Activated CD4-positive, alpha-beta T cell treated with anti-CD3 and anti-CD28 coated beads for 36 hours (primary cell): ENCODE measurements at regions of chrX and their contacts with region 1.

Region 1: DNA sequence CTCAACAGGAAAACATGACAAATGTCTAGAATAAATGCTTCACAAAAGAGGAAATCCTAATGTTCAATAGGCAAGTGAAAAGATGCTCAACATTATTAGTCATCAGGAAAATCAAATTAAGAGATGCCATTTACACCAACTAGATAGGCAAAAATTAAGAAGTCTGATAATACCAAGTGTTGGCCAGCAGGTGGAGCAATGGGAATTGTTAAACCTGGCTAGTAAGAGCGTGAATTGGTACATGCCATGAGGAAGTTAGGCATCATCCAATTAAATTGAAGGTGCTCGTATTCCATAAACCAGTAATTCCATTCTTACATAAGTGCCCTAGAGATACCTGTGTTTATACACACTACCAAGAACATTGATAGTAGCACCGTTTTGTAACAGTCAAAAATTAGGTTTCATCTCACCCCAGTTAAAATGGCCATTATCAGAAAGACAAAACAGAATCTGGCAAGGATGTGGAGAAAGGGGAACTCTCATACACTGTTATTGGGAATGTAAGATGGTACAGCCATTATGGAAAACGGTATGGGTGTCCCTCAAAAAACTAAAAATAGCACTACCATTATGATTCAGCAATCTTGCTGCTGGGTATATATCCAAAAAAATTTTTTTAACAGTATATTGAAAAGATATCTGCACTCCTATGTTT is 14.0 kb upstream of the ZCCHC18 start:
- DNase-seq: peak; percentile 66
- ATAC-seq: no peak
- H3K4me3 Mint-ChIP-seq: no peak overlapping the region
- H3K27ac Mint-ChIP-seq: no peak overlapping the region
- H3K4me1 Mint-ChIP-seq: peaks cover 3% of the 10 kb centered on the region
- H3K27me3 Mint-ChIP-seq: peaks cover 7% of the 10 kb centered on the region

Region 2: DNA sequence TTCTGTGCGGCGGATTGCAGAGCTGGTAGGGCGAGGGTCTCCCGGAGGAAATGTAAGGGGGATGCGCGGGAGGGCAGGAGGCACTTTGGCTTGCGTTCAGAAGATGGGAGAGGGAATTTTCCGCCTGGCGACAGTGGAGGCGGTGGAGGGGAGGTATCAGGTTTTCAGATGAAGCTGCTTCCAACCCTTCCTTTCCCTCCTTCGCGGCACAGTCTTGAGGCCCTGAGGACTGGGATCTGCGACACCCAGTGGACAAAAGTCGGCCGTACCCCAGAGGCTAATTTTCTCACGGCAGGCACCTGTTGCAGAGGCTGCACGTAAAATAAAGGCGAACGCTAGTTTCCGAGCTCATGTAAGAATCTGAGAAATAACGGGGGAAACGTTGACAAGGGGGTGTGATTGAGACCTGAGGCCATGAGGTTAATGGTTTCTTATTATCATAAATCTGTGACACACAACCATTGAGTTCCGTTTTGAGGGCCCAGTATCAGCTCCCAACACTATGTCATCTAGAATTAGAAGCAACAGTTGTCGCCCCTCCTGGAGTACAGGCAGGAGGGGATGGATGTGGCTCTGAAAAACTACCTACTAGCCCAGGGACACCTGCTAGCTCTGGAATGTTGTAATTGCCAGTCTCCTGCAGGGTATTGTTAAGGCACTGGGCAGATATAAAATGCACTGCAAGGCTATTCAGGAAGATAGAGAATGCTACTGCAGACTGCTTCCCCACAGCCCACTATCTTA is 15.1 kb after region 1 on chrX:
- CTCF ChIA-PET with region 1: interaction called, 22 read pairs
- POLR2A ChIA-PET with region 1: no interaction called
- intact Hi-C with region 1: loop called (anchors 1 to 2 kb)
- DNase-seq: peak; percentile 70
- ATAC-seq: peak; percentile 73
- H3K4me3 Mint-ChIP-seq: peak overlapping the region; percentile 74
- H3K27ac Mint-ChIP-seq: peak overlapping the region; percentile 65
- H3K4me1 Mint-ChIP-seq: peaks cover 36% of the 10 kb centered on the region
- H3K27me3 Mint-ChIP-seq: no peaks in the 10 kb centered on the region

Region 3: DNA sequence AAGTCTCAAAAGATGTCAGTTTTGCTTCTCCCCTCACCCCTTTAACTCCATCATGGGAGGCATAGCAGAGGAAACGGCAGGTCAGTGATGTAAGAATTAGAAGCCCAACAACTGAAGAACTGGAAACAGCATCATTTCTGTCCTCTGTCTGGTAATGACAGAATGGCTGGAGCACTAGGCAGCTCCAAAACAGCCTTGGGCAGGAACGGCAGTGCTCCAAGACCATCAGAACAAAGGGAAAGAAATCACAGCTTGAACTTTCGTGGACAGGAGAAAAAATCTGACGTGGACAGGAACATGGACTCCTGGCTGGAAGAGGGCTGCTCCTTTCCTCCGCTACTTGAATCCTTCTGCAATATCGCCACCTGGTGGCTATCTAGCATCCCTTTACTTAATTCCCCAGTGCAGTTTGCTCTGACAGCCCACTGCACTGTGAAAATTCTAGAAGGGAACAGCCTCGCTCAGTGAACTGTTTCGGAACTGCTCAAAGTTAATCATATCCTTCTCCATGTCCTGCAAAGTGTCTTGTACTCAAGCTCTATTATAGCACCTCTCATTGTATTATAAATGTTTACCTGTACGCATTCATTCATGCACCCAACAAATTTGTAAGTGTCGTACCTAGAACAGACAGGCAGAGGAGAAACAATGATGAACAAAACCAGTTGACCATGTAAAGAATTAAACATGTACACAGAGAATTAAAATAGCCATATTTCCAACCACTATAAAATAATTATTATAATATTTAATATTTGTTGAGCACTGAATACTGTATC is 38.1 kb after region 1 on chrX:
- CTCF ChIA-PET with region 1: interaction called, 26 read pairs
- POLR2A ChIA-PET with region 1: no interaction called
- intact Hi-C with region 1: loop called (anchors 1 kb)
- DNase-seq: peak; percentile 64
- ATAC-seq: peak; percentile 70
- H3K4me3 Mint-ChIP-seq: no peak overlapping the region
- H3K27ac Mint-ChIP-seq: no peak overlapping the region
- H3K4me1 Mint-ChIP-seq: peaks cover 21% of the 10 kb centered on the region
- H3K27me3 Mint-ChIP-seq: no peaks in the 10 kb centered on the region

Region 4: DNA sequence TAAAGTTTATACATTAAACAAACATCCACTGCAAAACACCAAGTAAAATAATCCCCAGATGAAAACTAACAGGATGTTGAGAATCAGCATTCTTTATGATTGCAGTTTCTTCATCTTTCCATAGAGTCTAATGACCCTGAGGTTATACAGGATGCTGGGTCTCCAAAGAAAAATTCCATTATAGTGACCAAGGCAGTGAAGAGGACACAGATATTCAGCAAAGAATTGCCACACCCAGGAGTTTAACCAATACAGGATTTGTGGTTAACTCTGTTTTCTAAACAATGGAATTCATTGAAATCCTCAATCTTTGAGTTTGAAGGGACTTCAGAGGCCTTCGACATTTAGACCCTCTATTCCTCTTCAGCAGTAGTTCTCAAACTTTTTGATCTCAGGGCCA is 232.7 kb after region 1 on chrX:
- CTCF ChIA-PET with region 1: no interaction called
- POLR2A ChIA-PET with region 1: no interaction called
- intact Hi-C with region 1: no loop called
- DNase-seq: no peak
- ATAC-seq: no peak
- H3K4me3 Mint-ChIP-seq: no peak overlapping the region
- H3K27ac Mint-ChIP-seq: no peak overlapping the region
- H3K4me1 Mint-ChIP-seq: no peaks in the 10 kb centered on the region
- H3K27me3 Mint-ChIP-seq: peaks cover 2% of the 10 kb centered on the region

Region 5: DNA sequence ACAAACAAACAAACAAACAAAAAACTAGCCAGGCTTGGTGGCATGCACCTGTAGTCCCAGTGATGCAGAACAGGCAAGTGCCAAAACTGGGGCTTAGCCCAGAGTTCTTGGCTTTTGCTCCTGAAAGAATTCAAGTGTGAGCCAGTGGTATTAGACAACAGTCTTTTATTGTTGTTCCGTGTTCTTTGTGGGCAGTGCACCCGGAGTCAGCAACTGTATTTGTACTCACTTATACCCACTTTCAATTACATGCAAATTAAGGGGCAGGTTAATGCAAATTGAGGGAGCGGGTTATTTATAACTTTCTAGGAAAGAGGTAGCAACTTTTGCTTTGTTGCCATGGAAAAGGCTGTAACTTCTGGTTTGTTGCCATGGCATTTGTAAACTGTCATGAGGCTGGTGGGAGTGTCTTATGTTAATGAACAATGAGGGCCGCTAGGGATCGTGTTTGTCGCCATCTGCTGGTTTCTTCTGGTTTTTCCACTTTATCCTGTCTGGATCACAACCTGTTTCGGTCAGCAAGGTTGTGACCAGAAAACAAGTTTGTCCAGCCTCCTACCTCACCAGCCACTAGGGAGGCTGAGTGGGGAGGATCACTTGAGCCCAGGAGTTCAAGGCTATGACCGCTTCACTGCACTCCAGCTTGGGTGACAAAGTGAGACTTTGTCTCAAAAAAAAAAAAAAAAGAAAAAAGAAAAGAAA is 245.3 kb after region 1 on chrX:
- CTCF ChIA-PET with region 1: no interaction called
- POLR2A ChIA-PET with region 1: no interaction called
- intact Hi-C with region 1: loop called in 1 of 2 experiments (anchors 1 kb)
- DNase-seq: peak; percentile 54
- ATAC-seq: no peak
- H3K4me3 Mint-ChIP-seq: no peak overlapping the region
- H3K27ac Mint-ChIP-seq: no peak overlapping the region
- H3K4me1 Mint-ChIP-seq: no peaks in the 10 kb centered on the region
- H3K27me3 Mint-ChIP-seq: peaks cover 2% of the 10 kb centered on the region

Region 6: DNA sequence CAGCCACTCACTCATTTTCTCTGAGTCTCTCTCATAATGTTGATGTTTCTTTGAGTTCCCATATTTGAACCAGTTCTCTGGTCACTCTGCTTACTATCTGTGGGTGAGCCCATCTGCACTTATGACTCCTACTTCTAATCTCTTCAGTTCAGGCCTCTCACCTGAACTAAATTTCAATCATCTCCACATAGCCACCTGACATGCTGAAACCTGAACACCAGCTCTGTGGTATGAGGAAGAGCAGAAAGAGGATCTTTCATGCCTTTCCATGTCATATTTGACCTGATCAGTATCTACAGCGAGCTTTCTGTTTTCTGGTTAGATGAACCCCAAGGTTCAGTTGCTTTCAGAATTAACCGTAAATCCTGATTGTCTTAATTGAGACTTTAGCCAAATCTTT is 278.7 kb after region 1 on chrX:
- CTCF ChIA-PET with region 1: no interaction called
- POLR2A ChIA-PET with region 1: no interaction called
- intact Hi-C with region 1: no loop called
- DNase-seq: no peak
- ATAC-seq: no peak
- H3K4me3 Mint-ChIP-seq: no peak overlapping the region
- H3K27ac Mint-ChIP-seq: no peak overlapping the region
- H3K4me1 Mint-ChIP-seq: no peaks in the 10 kb centered on the region
- H3K27me3 Mint-ChIP-seq: peaks cover 7% of the 10 kb centered on the region